A549 (cell line): ENCODE measurements at regions of chr19 and their contacts with region 1.

Region 1: GRCh38 chr19:44689056-44689895 is 9.7 kb upstream of the CEACAM16 start:
- DNase-seq: peak; percentile 66 to 95
- ATAC-seq: peak; percentile 59 to 72
- H3K4me3 ChIP-seq: no peak overlapping the region
- H3K27ac ChIP-seq: peak overlapping the region; percentile 87 to 92
- H3K4me1 ChIP-seq: peaks cover 84% of the 10 kb centered on the region
- CTCF ChIP-seq: peak; percentile 99
- EP300 ChIP-seq: no peak
- POLR2A ChIP-seq: no peak
- RAD21 ChIP-seq: peak; percentile 99 to 100

Region 2: GRCh38 chr19:44582581-44583265 is 106.6 kb before region 1 on chr19:
- CTCF ChIA-PET with region 1: interaction called, 19 read pairs
- POLR2A ChIA-PET with region 1: no interaction called
- DNase-seq: peak; percentile 58 to 65
- ATAC-seq: peak; percentile 44 to 80; a peak in 3 of 6 replicates
- H3K4me3 ChIP-seq: no peak overlapping the region
- H3K27ac ChIP-seq: peak overlapping the region in 1 of 2 experiments; percentile 7; a peak in 1 of 6 replicates
- H3K4me1 ChIP-seq: peaks cover 23% of the 10 kb centered on the region
- CTCF ChIP-seq: peak; percentile 50
- EP300 ChIP-seq: no peak; a peak in 1 of 5 replicates
- POLR2A ChIP-seq: no peak
- RAD21 ChIP-seq: peak in 1 of 2 experiments; percentile 60; a peak in 3 of 5 replicates

Region 3: DNA sequence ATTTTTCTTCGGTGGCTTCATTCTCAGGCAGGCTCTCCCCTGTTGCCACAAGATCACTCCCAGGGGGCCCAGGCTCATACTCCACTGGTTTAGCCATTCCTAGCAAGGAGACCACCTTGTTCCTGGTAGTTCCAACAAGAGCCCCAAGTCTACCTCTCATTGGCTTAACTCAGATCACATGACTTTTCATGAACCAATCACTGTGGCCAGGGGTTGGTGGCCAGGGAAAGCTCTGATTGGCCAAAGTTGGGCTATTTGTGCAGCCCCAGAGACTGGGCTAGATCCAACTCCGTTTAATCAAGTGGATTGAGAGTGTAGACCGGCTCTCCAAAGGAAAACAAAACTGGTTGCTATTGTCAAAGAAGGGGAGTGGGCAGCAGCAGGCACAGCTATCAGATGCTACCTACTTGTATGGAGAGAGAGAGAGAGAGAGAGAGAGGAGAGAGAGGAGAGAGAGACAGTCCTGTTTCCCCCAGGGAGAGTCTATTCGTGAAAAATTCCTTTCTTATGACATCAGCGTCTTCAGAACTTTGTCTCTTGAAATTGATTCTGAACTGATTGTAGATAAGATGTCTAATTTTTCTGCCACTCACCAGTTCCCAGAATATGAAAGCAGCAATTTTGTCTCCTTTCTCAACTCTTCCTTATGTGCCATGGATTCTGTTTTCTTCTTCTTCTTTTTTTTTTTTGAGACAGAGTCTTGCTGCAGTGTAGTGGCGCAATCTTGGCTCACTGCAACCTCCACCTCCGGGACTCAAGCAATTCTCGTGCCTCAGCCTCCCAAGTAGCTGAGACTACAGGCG is 12.1 kb before region 1 on chr19:
- CTCF ChIA-PET with region 1: interaction called, 22 read pairs
- POLR2A ChIA-PET with region 1: interaction called, 3 read pairs
- DNase-seq: peak; percentile 89 to 90
- ATAC-seq: peak; percentile 62 to 86
- H3K4me3 ChIP-seq: no peak overlapping the region
- H3K27ac ChIP-seq: peak overlapping the region; percentile 61 to 86
- H3K4me1 ChIP-seq: peaks cover 34% of the 10 kb centered on the region
- CTCF ChIP-seq: no peak
- EP300 ChIP-seq: no peak
- POLR2A ChIP-seq: no peak
- RAD21 ChIP-seq: no peak

Region 4: DNA sequence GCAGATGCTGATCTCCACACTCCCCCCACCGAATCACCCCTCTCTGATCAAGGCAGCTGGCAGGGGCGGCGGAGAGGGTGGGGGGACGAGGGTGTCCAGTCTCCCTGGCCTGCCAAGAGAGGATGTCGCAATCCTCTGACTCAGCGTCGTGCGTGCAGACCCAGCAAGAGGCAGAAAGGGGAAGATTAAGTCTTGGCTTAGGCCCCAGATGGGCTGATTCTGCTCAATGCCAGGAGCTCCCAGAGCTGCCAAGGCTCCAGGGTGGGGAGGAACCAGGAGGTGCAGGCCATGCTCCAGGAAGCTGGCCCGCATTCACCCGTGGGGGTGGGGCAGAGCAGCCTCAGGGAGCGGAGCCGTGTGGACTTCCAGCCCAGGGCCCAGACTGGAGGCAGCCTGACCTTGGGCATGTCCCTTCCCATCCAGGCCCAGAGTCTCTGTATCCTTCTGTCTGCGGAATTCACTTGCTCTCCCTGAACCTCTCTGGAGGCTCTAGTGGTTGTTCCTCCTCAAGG is 52.6 kb after region 1 on chr19:
- CTCF ChIA-PET with region 1: interaction called, 26 read pairs
- POLR2A ChIA-PET with region 1: interaction called, 11 read pairs
- DNase-seq: peak; percentile 97 to 100
- ATAC-seq: peak; percentile 62 to 73
- H3K4me3 ChIP-seq: 0 out of 3 replicates have a peak overlapping the region, but pooled peaks have one; percentile 2
- H3K27ac ChIP-seq: peak overlapping the region; percentile 92 to 99
- H3K4me1 ChIP-seq: peaks cover 93% of the 10 kb centered on the region
- CTCF ChIP-seq: no peak
- EP300 ChIP-seq: peak; percentile 97 to 99
- POLR2A ChIP-seq: peak; percentile 39; the same call in 1 of the 2 replicates
- RAD21 ChIP-seq: peak; percentile 37 to 67

Region 5: DNA sequence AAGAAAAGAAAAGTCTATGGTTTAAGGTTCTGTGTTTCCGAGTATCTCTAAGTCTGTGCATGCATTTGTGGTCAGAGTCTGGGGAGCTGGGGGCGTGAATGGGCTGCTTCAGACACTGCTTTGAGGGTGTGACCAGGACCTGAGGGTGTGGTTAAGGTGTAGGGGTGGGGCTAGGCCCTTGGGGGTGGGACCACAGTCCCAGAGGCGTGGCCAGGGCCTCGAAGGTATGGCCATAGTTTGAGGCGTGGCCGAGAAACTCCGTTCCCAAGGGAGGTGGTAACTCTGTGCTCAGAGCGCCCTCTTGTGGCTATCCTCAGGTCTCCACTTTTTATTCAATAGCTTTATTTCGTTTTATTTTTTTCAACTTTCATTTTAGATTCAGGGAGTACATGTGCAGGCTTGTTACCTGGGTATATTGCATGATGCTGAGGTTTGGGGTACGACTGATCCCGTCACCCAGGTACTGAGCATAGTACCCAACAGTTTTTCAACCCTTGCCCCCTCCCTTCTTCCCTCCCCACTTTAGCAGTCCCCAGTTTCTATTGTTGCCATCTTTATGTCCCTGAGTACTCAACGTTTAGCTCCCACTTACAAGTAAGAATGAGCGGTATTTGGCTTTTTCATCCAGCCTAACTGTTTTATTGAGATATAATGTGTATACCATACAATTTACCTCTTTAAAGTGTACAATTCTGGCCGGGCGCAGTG is 81.4 kb after region 1 on chr19:
- CTCF ChIA-PET with region 1: interaction called, 320 read pairs
- POLR2A ChIA-PET with region 1: interaction called, 8 read pairs
- DNase-seq: peak; percentile 99
- ATAC-seq: peak; percentile 96 to 99
- H3K4me3 ChIP-seq: no peak overlapping the region
- H3K27ac ChIP-seq: peak overlapping the region; percentile 74 to 88
- H3K4me1 ChIP-seq: peaks cover 47% of the 10 kb centered on the region
- CTCF ChIP-seq: peak; percentile 99
- EP300 ChIP-seq: no peak; a peak in 1 of 5 replicates
- POLR2A ChIP-seq: no peak
- RAD21 ChIP-seq: peak; percentile 100

Region 6: GRCh38 chr19:44800461-44800860 is 111.2 kb after region 1 on chr19:
- CTCF ChIA-PET with region 1: interaction called, 29 read pairs
- POLR2A ChIA-PET with region 1: no interaction called
- DNase-seq: peak; percentile 89 to 97
- ATAC-seq: peak; percentile 95 to 98
- H3K4me3 ChIP-seq: no peak overlapping the region
- H3K27ac ChIP-seq: peak overlapping the region; percentile 62 to 79; a peak in 5 of 6 replicates
- H3K4me1 ChIP-seq: peaks cover 19% of the 10 kb centered on the region
- CTCF ChIP-seq: peak; percentile 92
- EP300 ChIP-seq: no peak
- POLR2A ChIP-seq: no peak
- RAD21 ChIP-seq: peak; percentile 81 to 86